H1 (cell line): ENCODE measurements at regions of chr21 and their contacts with region 1.

Region 1: GRCh38 chr21:41167348-41168342 is at the start of gene BACE2:
- DNase-seq: peak in 1 of 2 experiments; percentile 84
- H3K4me3 ChIP-seq: peak within 1 kb of the TSS; percentile 56 to 96 (median 66)
- H3K27ac ChIP-seq: no peak within 1 kb of the TSS
- H3K4me1 ChIP-seq: peaks cover 0 to 7% (median 4%) of the 10 kb centered on the region in 4 experiments; a peak in 4 of 7 replicates
- H3K27me3 ChIP-seq: peaks cover 0 to 31% (median 22%) of the 10 kb centered on the region in 4 experiments; a peak in 6 of 7 replicates
- CTCF ChIP-seq: peak; percentile 50 to 66 (median 52)
- EP300 ChIP-seq: peak in 1 of 2 experiments; percentile 39; a peak in 1 of 3 replicates
- POLR2A ChIP-seq: no peak
- RAD21 ChIP-seq: peak; percentile 4 to 43; a peak in 3 of 4 replicates
- total RNA-seq, gene BACE2: 8.1 and 9.9 TPM in 2 replicates

Region 2: DNA sequence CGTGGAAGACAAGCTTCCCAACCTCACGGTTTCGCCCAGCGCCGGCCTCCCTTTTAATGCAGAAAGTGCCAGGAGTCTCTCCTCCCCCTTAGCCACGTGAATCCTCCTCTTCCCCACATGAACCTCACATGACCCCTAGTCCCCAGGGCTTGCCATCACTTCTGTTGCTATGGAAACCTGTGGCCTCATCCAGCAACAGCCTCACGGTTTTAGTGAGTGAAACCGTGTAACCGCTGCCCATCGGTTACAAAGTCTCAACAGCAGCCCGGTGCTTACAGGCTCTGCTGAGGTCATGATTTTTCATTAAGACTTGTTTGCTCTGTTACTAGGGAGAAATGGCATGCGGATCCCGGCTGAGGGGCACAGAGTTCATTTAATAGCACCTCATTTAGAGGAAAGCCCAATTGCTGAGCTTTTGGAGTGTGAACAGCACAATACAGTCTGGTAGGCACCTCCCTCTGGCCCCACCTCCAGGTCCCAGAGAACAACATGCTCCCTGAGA is 142.8 kb before region 1 on chr21:
- CTCF ChIA-PET with region 1: no interaction called
- POLR2A ChIA-PET with region 1: no interaction called
- DNase-seq: no peak
- H3K4me3 ChIP-seq: no peak overlapping the region
- H3K27ac ChIP-seq: no peak overlapping the region
- H3K4me1 ChIP-seq: no peaks in the 10 kb centered on the region
- H3K27me3 ChIP-seq: no peaks in the 10 kb centered on the region
- CTCF ChIP-seq: no peak
- EP300 ChIP-seq: no peak
- POLR2A ChIP-seq: no peak
- RAD21 ChIP-seq: no peak

Region 3: GRCh38 chr21:41133896-41134522 is 33.6 kb before region 1 on chr21:
- CTCF ChIA-PET with region 1: interaction called, 12 read pairs
- POLR2A ChIA-PET with region 1: no interaction called
- DNase-seq: no peak
- H3K4me3 ChIP-seq: no peak overlapping the region
- H3K27ac ChIP-seq: no peak overlapping the region
- H3K4me1 ChIP-seq: no peaks in the 10 kb centered on the region
- H3K27me3 ChIP-seq: no peaks in the 10 kb centered on the region; a peak in 1 of 7 replicates
- CTCF ChIP-seq: peak in 2 of 3 experiments; percentile 55 to 71; a peak in 3 of 4 replicates
- EP300 ChIP-seq: no peak
- POLR2A ChIP-seq: no peak
- RAD21 ChIP-seq: peak; percentile 71 to 72

Region 4: GRCh38 chr21:41147436-41148355 is 19.9 kb before region 1 on chr21:
- CTCF ChIA-PET with region 1: interaction called, 10 read pairs
- POLR2A ChIA-PET with region 1: no interaction called
- DNase-seq: no peak
- H3K4me3 ChIP-seq: no peak overlapping the region
- H3K27ac ChIP-seq: no peak overlapping the region
- H3K4me1 ChIP-seq: peaks cover 0 to 5% (median 0%) of the 10 kb centered on the region in 4 experiments; a peak in 2 of 7 replicates
- H3K27me3 ChIP-seq: peaks cover 0 to 10% (median 0%) of the 10 kb centered on the region in 4 experiments; a peak in 2 of 7 replicates
- CTCF ChIP-seq: peak in 2 of 3 experiments; percentile 1 to 11; a peak in 2 of 4 replicates
- EP300 ChIP-seq: no peak
- POLR2A ChIP-seq: no peak
- RAD21 ChIP-seq: no peak

Region 5: DNA sequence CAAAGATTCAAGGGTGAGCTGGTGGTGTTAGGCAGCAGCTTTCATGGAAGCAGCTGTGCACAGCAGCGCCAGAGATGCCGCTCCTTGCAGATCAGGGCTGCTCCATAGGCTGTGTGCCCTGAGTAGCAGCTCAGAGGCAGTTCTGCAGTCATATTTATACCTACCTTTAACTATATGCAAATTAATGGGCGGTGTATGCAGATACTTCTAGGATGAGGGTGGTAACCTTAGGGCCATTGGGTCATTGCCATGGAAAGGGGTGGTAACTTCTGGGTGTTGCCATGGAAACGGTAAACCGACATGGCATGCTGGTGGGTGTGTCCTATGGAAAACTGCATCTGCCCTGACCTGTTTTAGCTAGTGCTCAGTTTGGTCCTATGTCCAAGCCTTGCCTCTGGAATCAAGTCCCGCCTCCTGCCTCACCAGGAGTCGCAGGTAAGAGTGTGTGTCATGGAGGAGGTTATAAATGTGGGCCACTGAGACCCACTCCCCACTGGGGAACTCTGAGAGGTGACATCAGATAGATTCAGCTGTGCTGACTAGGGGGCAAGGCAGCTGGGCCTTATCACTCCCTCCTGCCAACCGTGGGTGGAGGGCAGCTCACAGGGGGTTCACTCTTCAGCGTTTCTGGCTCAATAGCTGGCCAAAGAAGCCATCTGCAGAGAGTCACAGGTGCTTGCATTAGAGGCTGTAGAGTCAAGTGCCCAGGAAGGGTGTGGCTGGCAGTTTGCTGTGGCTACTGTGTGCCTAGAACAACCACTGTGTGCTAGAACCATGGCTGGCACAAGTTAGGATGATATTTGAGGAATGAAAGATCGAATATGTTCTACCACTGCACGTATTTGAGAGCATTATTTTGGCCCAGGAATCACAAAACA is 19.3 kb after region 1 on chr21:
- CTCF ChIA-PET with region 1: interaction called, 81 read pairs
- POLR2A ChIA-PET with region 1: no interaction called
- DNase-seq: no peak
- H3K4me3 ChIP-seq: no peak overlapping the region
- H3K27ac ChIP-seq: no peak overlapping the region
- H3K4me1 ChIP-seq: no peaks in the 10 kb centered on the region
- H3K27me3 ChIP-seq: no peaks in the 10 kb centered on the region
- CTCF ChIP-seq: no peak
- EP300 ChIP-seq: no peak
- POLR2A ChIP-seq: no peak
- RAD21 ChIP-seq: no peak

Region 6: DNA sequence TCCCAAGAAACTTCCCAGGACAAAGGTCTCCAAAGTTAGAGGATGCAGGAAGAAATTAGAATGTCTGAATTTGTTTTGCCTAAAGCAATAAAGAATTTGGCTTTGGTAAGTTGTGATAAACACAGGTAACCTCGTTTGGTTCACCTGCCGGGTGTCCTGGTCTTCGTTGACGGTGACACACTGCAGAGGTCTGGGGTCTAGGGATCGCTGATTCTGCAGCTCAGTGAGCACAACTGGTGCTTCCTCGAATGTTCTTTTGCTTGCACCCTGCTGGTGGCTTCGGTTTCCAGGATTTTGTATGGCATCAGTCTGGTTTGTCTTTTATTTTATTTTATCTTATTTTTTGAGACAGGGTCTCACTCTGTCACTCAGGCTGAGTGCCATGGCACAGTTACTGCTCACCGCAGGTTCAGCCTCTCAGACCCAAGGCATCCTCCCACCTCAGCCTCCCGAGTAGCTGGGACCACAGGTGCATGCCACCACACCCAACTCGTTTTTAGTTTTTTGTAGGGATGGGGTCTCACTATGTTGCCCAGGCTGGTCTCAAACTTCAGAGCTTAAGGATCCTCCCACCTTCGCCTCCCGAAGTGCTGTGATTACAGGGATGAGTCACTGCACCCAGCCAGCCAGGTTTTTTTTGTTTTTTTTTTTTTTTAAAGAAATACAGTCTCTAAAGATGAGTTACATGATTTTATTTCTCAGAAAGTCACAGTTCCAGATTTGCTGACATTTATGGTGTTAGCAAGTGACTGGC is 29.2 kb after region 1 on chr21:
- CTCF ChIA-PET with region 1: interaction called, 11 read pairs
- POLR2A ChIA-PET with region 1: no interaction called
- DNase-seq: no peak
- H3K4me3 ChIP-seq: no peak overlapping the region
- H3K27ac ChIP-seq: no peak overlapping the region
- H3K4me1 ChIP-seq: no peaks in the 10 kb centered on the region; a peak in 1 of 7 replicates
- H3K27me3 ChIP-seq: no peaks in the 10 kb centered on the region
- CTCF ChIP-seq: no peak
- EP300 ChIP-seq: no peak
- POLR2A ChIP-seq: no peak
- RAD21 ChIP-seq: no peak